CD8-positive, alpha-beta T cell (primary cell): ENCODE measurements at regions of chr7 and their contacts with region 1.

Region 1: GRCh38 chr7:19919261-19920095 is 146.1 kb upstream of the TMEM196 start:
- DNase-seq: no peak
- ATAC-seq: no peak
- H3K4me3 ChIP-seq: no peak overlapping the region
- H3K4me3 Mint-ChIP-seq: no peak overlapping the region
- H3K27ac ChIP-seq: no peak overlapping the region
- H3K27ac Mint-ChIP-seq: no peak overlapping the region
- H3K4me1 ChIP-seq: no peaks in the 10 kb centered on the region
- H3K4me1 Mint-ChIP-seq: no peaks in the 10 kb centered on the region
- H3K27me3 ChIP-seq: no peaks in the 10 kb centered on the region
- H3K27me3 Mint-ChIP-seq: no peaks in the 10 kb centered on the region
- CTCF ChIP-seq: no peak

Region 2: DNA sequence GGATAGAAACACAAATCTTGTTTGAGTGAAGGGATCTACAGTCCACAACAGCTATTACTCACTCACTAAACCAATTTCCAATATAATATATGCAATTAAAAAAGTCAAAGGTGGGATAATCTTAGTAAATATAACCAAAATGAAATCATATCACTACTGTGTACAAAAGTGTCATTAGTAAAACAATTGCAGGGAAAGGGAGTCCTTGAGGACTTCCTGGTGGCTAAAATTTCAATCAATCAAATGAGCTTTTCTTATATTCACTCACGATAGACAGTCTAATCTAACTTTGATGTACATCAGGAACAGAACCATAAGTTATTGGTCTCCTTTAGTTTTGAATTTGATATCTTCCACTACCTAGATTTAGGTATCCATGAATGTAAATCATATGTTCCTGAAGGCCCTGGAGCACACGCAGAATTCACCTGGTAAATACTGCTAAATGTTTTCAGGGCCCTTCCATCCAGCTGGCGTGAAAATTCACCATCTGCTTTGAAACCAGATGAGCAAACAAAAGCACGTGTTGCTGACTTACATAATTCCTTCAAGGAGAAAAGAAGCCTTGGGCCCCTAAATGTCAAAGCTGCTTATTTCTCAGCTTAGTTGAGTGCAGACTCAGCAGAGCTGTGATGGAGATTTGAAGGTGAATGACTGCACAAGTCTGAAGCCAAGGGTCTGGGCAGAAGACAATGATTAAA is 13.2 kb after region 1 on chr7:
- CTCF ChIA-PET with region 1: no interaction called
- POLR2A ChIA-PET with region 1: no interaction called
- intact Hi-C with region 1: no loop called
- DNase-seq: no peak
- ATAC-seq: no peak
- H3K4me3 ChIP-seq: no peak overlapping the region
- H3K4me3 Mint-ChIP-seq: no peak overlapping the region
- H3K27ac ChIP-seq: no peak overlapping the region
- H3K27ac Mint-ChIP-seq: no peak overlapping the region
- H3K4me1 ChIP-seq: no peaks in the 10 kb centered on the region
- H3K4me1 Mint-ChIP-seq: no peaks in the 10 kb centered on the region
- H3K27me3 ChIP-seq: no peaks in the 10 kb centered on the region
- H3K27me3 Mint-ChIP-seq: no peaks in the 10 kb centered on the region
- CTCF ChIP-seq: no peak

Region 3: DNA sequence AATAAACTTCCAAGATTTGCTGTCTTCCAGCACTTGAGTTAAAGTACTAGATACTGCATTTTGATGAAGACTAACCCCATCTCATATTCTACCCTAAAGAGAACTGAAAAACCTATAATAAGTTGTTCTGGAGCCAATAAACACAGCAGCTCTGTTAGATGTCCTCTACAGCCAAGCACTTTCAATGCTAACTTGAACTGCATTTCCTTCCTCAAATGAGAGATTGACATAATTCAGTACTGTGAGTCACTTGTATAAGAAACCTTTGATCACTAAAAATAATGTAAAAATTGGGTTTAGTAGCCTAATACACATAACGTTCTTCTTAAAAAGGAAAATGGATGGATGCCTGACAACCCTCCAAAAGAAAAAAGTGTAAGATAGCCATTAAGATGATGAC is 492.6 kb after region 1 on chr7:
- CTCF ChIA-PET with region 1: no interaction called
- POLR2A ChIA-PET with region 1: no interaction called
- intact Hi-C with region 1: loop called in 1 of 2 experiments (anchors 5 kb)
- DNase-seq: no peak
- ATAC-seq: no peak
- H3K4me3 ChIP-seq: no peak overlapping the region
- H3K4me3 Mint-ChIP-seq: no peak overlapping the region
- H3K27ac ChIP-seq: no peak overlapping the region
- H3K27ac Mint-ChIP-seq: no peak overlapping the region
- H3K4me1 ChIP-seq: no peaks in the 10 kb centered on the region
- H3K4me1 Mint-ChIP-seq: no peaks in the 10 kb centered on the region
- H3K27me3 ChIP-seq: no peaks in the 10 kb centered on the region
- H3K27me3 Mint-ChIP-seq: no peaks in the 10 kb centered on the region
- CTCF ChIP-seq: no peak